H1 (cell line): ENCODE measurements at regions of chr1 and their contacts with region 1.

Region 1: DNA sequence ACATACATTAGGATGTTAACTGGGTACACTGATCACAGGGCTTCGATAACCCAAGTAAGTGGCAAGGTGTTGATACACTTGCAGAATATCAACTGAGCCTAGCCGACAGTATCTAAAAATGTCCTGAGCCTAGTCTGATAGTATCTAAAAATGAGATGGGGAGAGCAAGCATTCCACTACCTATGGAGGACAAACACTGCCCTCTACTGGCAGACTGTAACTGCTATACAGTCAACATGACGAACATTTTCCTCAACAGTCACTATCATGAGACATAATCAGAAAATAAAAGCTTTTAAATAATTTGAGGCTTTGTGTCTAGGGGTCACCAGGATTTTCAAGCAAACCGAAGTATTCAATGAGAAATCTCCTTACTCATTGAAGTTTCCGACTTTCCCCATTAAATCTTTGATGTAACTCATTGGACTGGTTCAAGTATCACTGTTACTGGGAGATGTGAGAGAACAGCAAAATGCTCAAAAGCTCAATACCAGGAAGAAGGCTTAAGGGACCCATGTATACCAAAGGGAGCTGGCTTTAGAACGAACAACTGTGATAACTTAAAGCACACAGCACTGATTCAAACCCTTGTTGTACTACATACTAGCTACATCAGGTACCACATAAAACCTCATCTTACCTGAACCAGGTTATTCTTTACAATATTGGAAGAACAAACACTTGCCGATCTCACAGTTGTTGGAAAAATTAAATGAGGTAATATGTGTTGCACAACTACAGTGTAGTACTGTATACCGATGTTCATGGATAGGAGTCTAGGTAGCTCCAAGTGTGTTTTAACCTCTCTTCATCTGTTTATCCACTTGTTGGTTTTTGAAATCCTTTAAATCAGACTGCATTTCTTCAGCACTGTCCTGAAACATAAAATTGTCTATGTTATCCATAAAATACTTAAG is 31.1 kb upstream of the SLC45A3 start:
- DNase-seq: no peak
- H3K4me3 ChIP-seq: no peak overlapping the region
- H3K27ac ChIP-seq: peak overlapping the region; percentile 12; the same call in 1 of the 2 replicates
- H3K4me1 ChIP-seq: peaks cover 0 to 3% (median 1%) of the 10 kb centered on the region in 4 experiments; a peak in 2 of 7 replicates
- H3K27me3 ChIP-seq: no peaks in the 10 kb centered on the region
- CTCF ChIP-seq: peak in 2 of 3 experiments; percentile 85 to 86; a peak in 3 of 4 replicates
- EP300 ChIP-seq: no peak
- POLR2A ChIP-seq: no peak
- RAD21 ChIP-seq: peak; percentile 94 to 95

Region 2: DNA sequence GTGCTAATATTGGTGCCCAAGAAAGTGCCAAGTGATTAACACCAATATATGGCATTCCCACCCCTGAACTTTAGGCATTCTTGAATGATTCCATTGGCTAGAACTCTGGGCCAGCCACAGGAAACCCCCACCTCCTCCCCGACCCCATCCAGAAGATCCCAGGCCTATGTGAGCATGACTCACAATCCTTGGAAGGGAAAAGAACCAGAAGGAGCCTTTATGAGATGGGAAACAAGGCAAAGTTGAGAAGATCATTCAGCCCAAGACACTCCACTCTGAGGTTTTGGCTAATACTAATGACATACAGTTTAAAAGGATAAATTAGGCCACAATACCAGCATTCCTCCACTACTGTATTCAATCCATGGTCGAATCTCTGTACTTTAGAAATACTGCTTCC is 101.3 kb before region 1 on chr1:
- CTCF ChIA-PET with region 1: interaction called, 10 read pairs
- POLR2A ChIA-PET with region 1: no interaction called
- DNase-seq: no peak
- H3K4me3 ChIP-seq: no peak overlapping the region
- H3K27ac ChIP-seq: no peak overlapping the region
- H3K4me1 ChIP-seq: no peaks in the 10 kb centered on the region
- H3K27me3 ChIP-seq: peaks cover 0 to 2% (median 0%) of the 10 kb centered on the region in 4 experiments; a peak in 1 of 7 replicates
- CTCF ChIP-seq: no peak
- EP300 ChIP-seq: no peak
- POLR2A ChIP-seq: no peak
- RAD21 ChIP-seq: no peak

Region 3: GRCh38 chr1:205645519-205645918 is 65.8 kb before region 1 on chr1:
- CTCF ChIA-PET with region 1: interaction called, 19 read pairs
- POLR2A ChIA-PET with region 1: interaction called, 3 read pairs
- DNase-seq: no peak
- H3K4me3 ChIP-seq: no peak overlapping the region
- H3K27ac ChIP-seq: no peak overlapping the region
- H3K4me1 ChIP-seq: peaks cover 2 to 8% (median 4%) of the 10 kb centered on the region in 4 experiments; a peak in 4 of 7 replicates
- H3K27me3 ChIP-seq: no peaks in the 10 kb centered on the region
- CTCF ChIP-seq: peak in 1 of 3 experiments; percentile 6; a peak in 1 of 4 replicates
- EP300 ChIP-seq: no peak
- POLR2A ChIP-seq: no peak
- RAD21 ChIP-seq: no peak

Region 4: GRCh38 chr1:205693421-205693991 is 17.9 kb before region 1 on chr1:
- CTCF ChIA-PET with region 1: interaction called, 152 read pairs
- POLR2A ChIA-PET with region 1: interaction called, 5 read pairs
- DNase-seq: no peak
- H3K4me3 ChIP-seq: no peak overlapping the region
- H3K27ac ChIP-seq: no peak overlapping the region
- H3K4me1 ChIP-seq: peaks cover 4 to 8% (median 5%) of the 10 kb centered on the region in 4 experiments; a peak in 6 of 7 replicates
- H3K27me3 ChIP-seq: no peaks in the 10 kb centered on the region
- CTCF ChIP-seq: no peak
- EP300 ChIP-seq: no peak
- POLR2A ChIP-seq: no peak
- RAD21 ChIP-seq: no peak

Region 5: GRCh38 chr1:205729945-205730610 is 18.7 kb after region 1 on chr1:
- CTCF ChIA-PET with region 1: interaction called, 54 read pairs
- POLR2A ChIA-PET with region 1: interaction called, 21 read pairs
- DNase-seq: no peak
- H3K4me3 ChIP-seq: no peak overlapping the region
- H3K27ac ChIP-seq: no peak overlapping the region
- H3K4me1 ChIP-seq: no peaks in the 10 kb centered on the region
- H3K27me3 ChIP-seq: no peaks in the 10 kb centered on the region
- CTCF ChIP-seq: no peak
- EP300 ChIP-seq: no peak
- POLR2A ChIP-seq: no peak
- RAD21 ChIP-seq: no peak

Region 6: GRCh38 chr1:205870236-205870635 is 158.9 kb after region 1 on chr1:
- CTCF ChIA-PET with region 1: no interaction called
- POLR2A ChIA-PET with region 1: no interaction called
- DNase-seq: no peak
- H3K4me3 ChIP-seq: no peak overlapping the region
- H3K27ac ChIP-seq: no peak overlapping the region
- H3K4me1 ChIP-seq: no peaks in the 10 kb centered on the region
- H3K27me3 ChIP-seq: no peaks in the 10 kb centered on the region
- CTCF ChIP-seq: no peak
- EP300 ChIP-seq: no peak
- POLR2A ChIP-seq: no peak
- RAD21 ChIP-seq: no peak